Ascending aorta (tissue), 2 donors: ENCODE measurements at regions of chr20 and their contacts with region 1.

Region 1: DNA sequence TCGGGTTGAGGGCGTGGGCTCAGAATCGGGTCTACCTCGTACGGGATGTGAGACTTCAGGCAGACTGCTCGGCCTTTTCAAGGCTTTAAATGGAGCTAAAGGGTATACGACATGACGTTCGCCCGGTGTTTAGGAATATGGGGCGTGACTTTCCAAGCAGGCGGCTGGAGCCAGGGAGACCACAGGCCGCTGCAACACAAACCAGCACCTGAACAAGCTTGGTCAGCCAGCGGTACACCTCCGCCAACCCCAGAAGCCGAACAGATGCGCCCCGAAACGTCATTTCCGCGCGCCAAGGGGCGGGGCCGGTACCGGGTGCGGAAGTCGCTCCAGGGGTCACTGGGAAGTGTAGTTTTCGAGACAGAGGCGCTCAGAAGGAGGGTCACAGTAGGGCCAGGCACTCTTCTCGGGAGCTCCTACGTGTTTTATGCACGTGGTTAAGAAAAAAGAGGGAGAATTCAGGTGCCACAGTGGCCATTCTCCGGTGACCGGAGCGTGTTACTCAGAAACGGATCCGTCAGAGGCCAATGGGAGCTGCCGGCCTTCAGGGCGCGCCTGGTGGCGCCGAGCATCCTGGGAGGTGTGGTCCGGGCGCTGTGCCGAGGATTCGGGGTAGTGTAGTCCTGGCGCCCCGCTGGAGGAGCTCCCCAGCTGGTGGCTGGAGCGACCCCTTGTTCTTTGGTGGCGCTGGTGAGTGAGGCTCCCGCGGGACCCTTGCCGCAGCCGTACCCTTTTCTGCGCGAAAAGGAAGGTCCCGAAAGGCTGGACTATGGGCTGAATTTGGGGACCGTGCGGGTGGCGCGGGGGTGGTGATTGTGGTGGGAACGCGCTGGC is at the start of gene ZNF133:
- DNase-seq: peak; percentile 84 to 98
- H3K4me3 ChIP-seq: peak within 1 kb of the TSS; percentile 77 to 87
- H3K27ac ChIP-seq: peak within 1 kb of the TSS; percentile 90 to 96
- H3K4me1 ChIP-seq: peaks cover 0 to 7% of the 10 kb centered on the region in 2 donors
- H3K27me3 ChIP-seq: no peaks in the 10 kb centered on the region
- CTCF ChIP-seq: no peak
- total RNA-seq, gene ZNF133: 0.85 TPM

Region 2: DNA sequence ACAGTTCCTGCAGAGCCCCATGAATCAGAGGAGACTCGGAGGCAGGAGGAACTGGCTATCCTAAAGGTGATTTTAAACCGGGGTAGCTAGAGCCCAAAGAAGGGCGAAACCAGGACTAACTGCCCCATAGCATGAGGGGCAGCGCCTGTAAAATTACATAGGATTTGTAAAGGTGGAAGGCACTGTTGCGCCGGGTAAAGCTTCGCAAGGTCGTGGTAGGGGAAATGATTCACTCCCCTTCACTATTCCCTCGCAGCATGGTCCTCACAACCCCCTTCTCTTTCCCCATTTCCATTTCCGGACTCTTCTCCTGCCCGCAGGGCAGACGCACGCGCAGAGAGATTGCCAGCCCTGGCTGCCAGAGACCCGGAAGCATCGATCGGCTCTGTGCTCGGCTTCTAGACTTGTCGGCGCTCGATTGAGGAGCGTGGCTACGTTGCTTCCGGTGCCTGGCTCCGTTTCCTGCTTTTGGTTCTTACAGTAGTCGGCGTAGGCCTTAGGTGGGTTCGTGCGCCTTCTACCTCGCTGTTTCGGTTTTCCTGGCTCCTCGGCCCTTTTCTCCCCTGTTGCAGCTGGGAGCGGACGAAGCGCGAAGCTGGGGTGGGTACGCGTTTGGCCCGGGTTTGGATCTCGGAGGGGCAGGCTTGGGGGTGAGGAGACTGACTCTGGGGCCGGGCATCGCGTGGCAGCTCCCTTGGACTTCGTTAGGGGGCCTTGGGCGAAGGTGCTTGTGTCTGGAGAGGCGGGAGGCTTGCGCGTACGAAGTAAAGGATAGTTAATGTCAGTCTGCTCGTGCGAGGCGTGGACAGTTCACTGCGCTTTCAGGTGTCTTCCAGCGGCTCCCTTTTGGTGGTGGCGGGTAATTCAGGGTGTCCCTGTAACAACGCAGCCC is 1558.3 kb before region 1 on chr20 and contains the start of gene SNRPB2:
- intact Hi-C with region 1: loop called (anchors 10 kb)
- DNase-seq: peak; percentile 64 to 96
- H3K4me3 ChIP-seq: peak within 1 kb of the TSS; percentile 79 to 80
- H3K27ac ChIP-seq: peak within 1 kb of the TSS; percentile 55 to 75
- H3K4me1 ChIP-seq: peaks cover 0 to 12% of the 10 kb centered on the region in 2 donors
- H3K27me3 ChIP-seq: no peaks in the 10 kb centered on the region
- CTCF ChIP-seq: no peak
- total RNA-seq, gene SNRPB2: 3.4 TPM

Region 3: GRCh38 chr20:18137412-18138265 is 150.5 kb before region 1 on chr20 and contains the starts of genes KAT14 and PET117:
- intact Hi-C with region 1: loop called (anchors 5 kb)
- DNase-seq: peak; percentile 36 to 92
- H3K4me3 ChIP-seq: peak within 1 kb of the TSS; percentile 76 to 81
- H3K27ac ChIP-seq: peak within 1 kb of the TSS; percentile 88
- H3K4me1 ChIP-seq: peaks cover 3 to 18% of the 10 kb centered on the region in 2 donors
- H3K27me3 ChIP-seq: no peaks in the 10 kb centered on the region
- CTCF ChIP-seq: no peak
- total RNA-seq, gene KAT14: 1.7 TPM
- total RNA-seq, gene PET117: 37.1 TPM

Region 4: GRCh38 chr20:18507218-18508021 is 219.3 kb after region 1 on chr20 and contains the start of gene SEC23B:
- intact Hi-C with region 1: loop called (anchors 1 kb)
- DNase-seq: peak; percentile 94 to 99
- H3K4me3 ChIP-seq: peak within 1 kb of the TSS; percentile 64 to 78
- H3K27ac ChIP-seq: peak within 1 kb of the TSS; percentile 88 to 94
- H3K4me1 ChIP-seq: peaks cover 4 to 11% of the 10 kb centered on the region in 2 donors
- H3K27me3 ChIP-seq: no peaks in the 10 kb centered on the region
- CTCF ChIP-seq: no peak
- total RNA-seq, gene SEC23B: 21.8 TPM

Region 5: DNA sequence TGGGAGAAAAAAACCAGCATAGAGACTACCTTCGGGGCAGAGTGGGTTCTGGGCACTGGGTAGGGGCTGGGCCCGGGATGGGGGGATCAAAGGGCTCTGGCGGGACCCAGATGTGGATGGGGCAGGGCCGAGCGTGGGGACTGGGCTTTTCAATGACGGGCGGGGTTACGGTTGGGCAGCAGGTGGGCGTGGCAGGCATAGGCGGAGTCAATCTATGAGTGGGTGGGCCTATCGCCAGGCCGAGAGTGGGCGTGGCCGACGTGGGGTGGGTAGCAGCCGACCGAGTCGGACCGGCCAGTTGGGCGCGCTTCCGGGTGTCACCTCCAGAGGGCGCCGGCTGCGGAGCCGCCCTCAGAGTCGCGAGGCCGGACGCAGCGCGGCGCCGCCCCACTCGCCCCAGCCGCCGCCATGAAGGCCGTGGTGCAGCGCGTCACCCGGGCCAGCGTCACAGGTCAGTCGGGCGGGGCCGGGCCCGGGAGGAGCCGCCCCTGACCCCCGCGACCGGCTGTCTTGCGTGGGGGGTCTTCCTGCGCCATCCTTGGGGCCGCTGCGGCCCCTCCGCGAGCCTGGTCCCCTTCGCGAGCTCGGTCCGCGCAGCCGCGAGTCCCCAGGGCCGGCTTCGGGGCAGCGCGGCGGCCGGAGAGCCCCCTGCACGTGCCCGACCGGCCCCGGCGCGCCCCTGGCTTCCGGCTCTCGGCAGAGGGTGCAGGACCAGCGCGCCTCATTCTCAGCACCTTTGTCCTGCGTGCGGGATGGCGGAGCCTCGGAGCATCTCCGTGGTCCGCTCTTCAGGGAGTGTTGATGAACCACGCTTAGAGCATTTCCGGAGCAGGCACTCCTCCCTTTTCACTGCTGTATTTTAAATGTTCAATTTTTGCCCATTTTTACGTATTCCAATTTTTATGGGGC is 299.8 kb after region 1 on chr20 and contains the start of gene DTD1:
- intact Hi-C with region 1: loop called (anchors 5 kb)
- DNase-seq: peak; percentile 67 to 97
- H3K4me3 ChIP-seq: peak within 1 kb of the TSS; percentile 83 to 98
- H3K27ac ChIP-seq: peak within 1 kb of the TSS; percentile 75 to 83
- H3K4me1 ChIP-seq: peaks cover 0 to 15% of the 10 kb centered on the region in 2 donors
- H3K27me3 ChIP-seq: no peaks in the 10 kb centered on the region
- CTCF ChIP-seq: peak; percentile 65 to 67 (median 66)
- total RNA-seq, gene DTD1: 34.9 TPM